Naive thymus-derived CD8-positive, alpha-beta T cell (primary cell): ENCODE measurements at regions of chr13 and their contacts with region 1.

Region 1: DNA sequence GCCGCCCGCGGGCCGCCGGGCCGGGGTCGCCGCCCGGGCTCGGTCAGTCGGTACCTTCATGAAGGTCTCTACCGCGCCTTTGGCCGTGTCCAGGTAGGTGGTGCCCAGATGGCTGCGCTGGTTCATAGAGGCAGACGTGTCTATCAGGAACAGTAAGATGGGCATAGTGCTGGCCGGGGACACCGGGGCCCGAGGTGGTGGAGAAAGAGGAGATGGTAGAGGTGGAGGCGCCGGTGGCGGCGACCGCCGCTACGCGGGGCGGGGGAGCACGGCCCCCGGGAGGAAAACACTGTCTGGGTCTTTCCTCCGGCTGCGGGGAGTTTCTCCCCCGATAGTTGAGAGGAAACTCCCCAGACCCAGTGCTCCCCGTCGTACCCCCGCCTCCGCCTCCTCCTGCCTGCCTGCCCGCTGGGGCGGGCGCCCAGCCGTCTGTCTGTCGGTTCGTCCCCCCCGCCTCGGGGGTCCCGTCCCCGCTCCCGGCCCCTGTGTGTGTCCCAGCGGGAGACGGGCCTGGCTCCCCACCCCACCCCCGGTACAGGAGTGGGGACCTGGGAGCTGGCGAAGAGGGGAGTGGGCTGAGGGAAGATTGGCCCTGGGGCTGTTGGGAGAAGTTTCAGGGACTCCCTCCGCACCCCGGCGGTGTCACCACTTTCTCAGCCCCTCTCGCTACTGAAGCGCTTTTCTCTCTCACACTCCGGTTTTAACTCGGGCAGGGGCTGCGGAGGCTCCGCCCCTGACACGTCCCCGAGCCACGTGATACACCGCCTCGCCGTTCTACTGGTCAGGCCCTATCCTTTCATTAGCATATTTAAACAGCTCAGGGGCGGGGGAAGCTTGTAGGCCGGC is at the start of gene INTS6:
- DNase-seq: peak; percentile 97 to 100 (median 99)
- ATAC-seq: peak; percentile 76 to 84
- H3K4me3 Mint-ChIP-seq: peak within 1 kb of the TSS; percentile 84 to 99 (median 94)
- H3K27ac Mint-ChIP-seq: peak within 1 kb of the TSS; percentile 95 to 100 (median 98)
- H3K4me1 Mint-ChIP-seq: peaks cover 22 to 56% (median 54%) of the 10 kb centered on the region in 4 donors
- H3K27me3 Mint-ChIP-seq: peaks cover 0 to 2% (median 0%) of the 10 kb centered on the region in 5 donors
- polyA plus RNA-seq, gene INTS6: 20.9 to 25.1 (median 23.9) TPM

Region 2: DNA sequence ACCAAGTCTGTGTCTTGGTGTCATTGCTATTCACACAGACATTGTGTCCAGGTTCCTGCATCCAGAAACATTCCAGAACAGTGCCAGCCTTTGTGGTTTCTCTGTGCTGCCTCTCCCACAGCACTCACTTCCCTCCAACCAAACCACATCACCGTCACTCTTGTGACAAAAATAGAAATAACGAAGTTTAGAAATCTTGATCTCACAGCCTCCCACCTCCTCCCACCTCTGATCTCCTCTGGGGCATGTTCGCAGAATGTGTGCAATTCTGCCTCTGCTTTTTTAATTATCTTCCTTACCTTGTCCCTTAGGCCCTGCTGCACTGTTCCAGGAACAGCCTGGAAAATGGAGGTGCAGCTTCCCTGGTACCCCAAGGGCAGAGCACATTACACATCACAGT is 121.8 kb before region 1 on chr13:
- POLR2A ChIA-PET with region 1: no interaction called
- DNase-seq: no peak
- ATAC-seq: no peak
- H3K4me3 Mint-ChIP-seq: no peak overlapping the region
- H3K27ac Mint-ChIP-seq: no peak overlapping the region
- H3K4me1 Mint-ChIP-seq: peaks cover 5 to 18% (median 14%) of the 10 kb centered on the region in 4 donors
- H3K27me3 Mint-ChIP-seq: no peaks in the 10 kb centered on the region

Region 3: GRCh38 chr13:51364404-51365008 is 88.1 kb before region 1 on chr13:
- POLR2A ChIA-PET with region 1: no interaction called
- DNase-seq: no peak
- ATAC-seq: no peak
- H3K4me3 Mint-ChIP-seq: no peak overlapping the region
- H3K27ac Mint-ChIP-seq: peak overlapping the region in 2 of 10 donors; percentile 11 to 48
- H3K4me1 Mint-ChIP-seq: peaks cover 0 to 2% (median under 1%) of the 10 kb centered on the region in 4 donors
- H3K27me3 Mint-ChIP-seq: no peaks in the 10 kb centered on the region

Region 4: GRCh38 chr13:51440381-51440780 is 12.2 kb before region 1 on chr13:
- POLR2A ChIA-PET with region 1: interaction called, 21 read pairs
- DNase-seq: no peak
- ATAC-seq: no peak
- H3K4me3 Mint-ChIP-seq: no peak overlapping the region
- H3K27ac Mint-ChIP-seq: peak overlapping the region in 1 of 10 donors; percentile 63
- H3K4me1 Mint-ChIP-seq: peaks cover 0 to 16% (median 10%) of the 10 kb centered on the region in 4 donors
- H3K27me3 Mint-ChIP-seq: no peaks in the 10 kb centered on the region

Region 5: GRCh38 chr13:51534041-51534817 is 81.6 kb after region 1 on chr13:
- POLR2A ChIA-PET with region 1: interaction called, 13 read pairs
- DNase-seq: peak in 7 of 10 donors; percentile 4 to 27 (median 22)
- ATAC-seq: peak; percentile 80 to 82
- H3K4me3 Mint-ChIP-seq: peak overlapping the region; percentile 19 to 64 (median 51)
- H3K27ac Mint-ChIP-seq: peak overlapping the region; percentile 28 to 91 (median 70)
- H3K4me1 Mint-ChIP-seq: peaks cover 9 to 50% (median 21%) of the 10 kb centered on the region in 4 donors
- H3K27me3 Mint-ChIP-seq: no peaks in the 10 kb centered on the region

Region 6: GRCh38 chr13:51645154-51645650 is 192.6 kb after region 1 on chr13:
- POLR2A ChIA-PET with region 1: interaction called, 29 read pairs
- DNase-seq: peak in 8 of 10 donors; percentile 22 to 82 (median 68)
- ATAC-seq: peak; percentile 74 to 89
- H3K4me3 Mint-ChIP-seq: peak overlapping the region; percentile 42 to 84 (median 66)
- H3K27ac Mint-ChIP-seq: peak overlapping the region; percentile 91 to 99 (median 98)
- H3K4me1 Mint-ChIP-seq: peaks cover 27 to 57% (median 52%) of the 10 kb centered on the region in 4 donors
- H3K27me3 Mint-ChIP-seq: no peaks in the 10 kb centered on the region

Region 7: GRCh38 chr13:51713564-51714206 is 261.1 kb after region 1 on chr13:
- POLR2A ChIA-PET with region 1: no interaction called
- DNase-seq: no peak
- ATAC-seq: no peak
- H3K4me3 Mint-ChIP-seq: no peak overlapping the region
- H3K27ac Mint-ChIP-seq: peak overlapping the region in 2 of 10 donors; percentile 5 to 66
- H3K4me1 Mint-ChIP-seq: peaks cover 0 to 2% (median 1%) of the 10 kb centered on the region in 4 donors
- H3K27me3 Mint-ChIP-seq: no peaks in the 10 kb centered on the region

Region 8: DNA sequence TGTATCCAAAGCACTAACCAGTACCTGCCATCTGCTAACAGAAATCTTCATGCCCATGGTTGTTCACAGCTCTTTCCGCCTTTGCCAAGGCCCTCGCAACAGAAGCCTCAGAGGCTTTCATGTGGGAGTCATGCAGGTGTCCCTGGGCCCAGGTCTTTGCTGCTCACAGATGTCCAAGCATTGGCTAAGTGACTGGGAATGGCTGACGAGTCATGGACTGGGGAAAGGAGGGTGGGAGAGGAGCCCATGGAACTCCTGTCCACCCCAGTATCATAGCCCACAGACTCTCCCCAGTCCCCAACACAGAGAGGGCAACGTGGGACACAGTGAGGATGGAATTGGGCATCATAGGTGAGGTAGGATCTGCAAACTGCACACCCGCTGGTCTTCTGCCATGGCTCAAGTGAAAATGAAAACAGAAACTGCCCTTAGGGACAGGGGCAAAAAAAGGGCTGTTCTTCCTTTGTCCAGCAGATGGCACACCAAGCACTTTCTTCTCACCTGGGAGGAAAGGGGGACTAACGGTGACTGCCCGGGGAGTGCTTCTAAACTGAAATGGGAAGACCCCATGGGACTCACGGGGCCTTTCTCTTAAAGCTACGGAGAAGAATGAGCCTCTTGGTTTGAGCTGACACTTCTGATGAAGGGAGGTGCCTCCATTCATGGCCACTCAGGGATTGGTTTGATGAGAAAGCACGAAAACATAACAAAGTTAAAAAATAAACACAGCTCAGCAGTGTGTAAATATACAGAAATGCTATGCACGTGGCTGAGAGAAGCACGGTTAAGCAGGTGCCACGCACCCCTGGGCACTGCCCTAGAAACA is 362.5 kb after region 1 on chr13:
- POLR2A ChIA-PET with region 1: interaction called, 149 read pairs
- DNase-seq: peak; percentile 48 to 87 (median 77)
- ATAC-seq: peak; percentile 69 to 74
- H3K4me3 Mint-ChIP-seq: peak overlapping the region; percentile 52 to 83 (median 77)
- H3K27ac Mint-ChIP-seq: peak overlapping the region; percentile 91 to 99 (median 96)
- H3K4me1 Mint-ChIP-seq: peaks cover 38 to 89% (median 86%) of the 10 kb centered on the region in 4 donors
- H3K27me3 Mint-ChIP-seq: no peaks in the 10 kb centered on the region